Left cardiac atrium (tissue), 4 donors: ENCODE measurements at regions of chr9 and their contacts with region 1.

Region 1: DNA sequence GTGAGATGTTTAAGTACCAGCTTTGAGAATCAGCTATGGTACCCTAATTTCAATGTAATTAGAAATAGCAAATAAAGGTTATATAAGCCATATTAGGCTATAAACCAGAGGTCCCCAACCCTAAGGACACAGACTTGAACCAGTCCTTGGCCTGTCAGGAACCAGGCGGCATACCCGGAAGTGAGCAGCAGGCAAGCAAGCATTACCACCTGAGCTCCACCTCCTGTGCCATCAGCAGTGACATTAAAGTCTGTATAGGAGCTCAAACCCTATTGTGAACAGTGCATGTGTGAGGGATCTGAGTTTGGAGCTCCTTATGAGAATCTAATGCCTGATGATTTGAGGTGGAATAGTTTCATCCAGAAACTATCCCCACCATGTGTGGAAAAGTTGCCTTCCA is 1009.5 kb downstream of the PTPRD start:
- DNase-seq: no peak
- ATAC-seq: no peak

Region 2: DNA sequence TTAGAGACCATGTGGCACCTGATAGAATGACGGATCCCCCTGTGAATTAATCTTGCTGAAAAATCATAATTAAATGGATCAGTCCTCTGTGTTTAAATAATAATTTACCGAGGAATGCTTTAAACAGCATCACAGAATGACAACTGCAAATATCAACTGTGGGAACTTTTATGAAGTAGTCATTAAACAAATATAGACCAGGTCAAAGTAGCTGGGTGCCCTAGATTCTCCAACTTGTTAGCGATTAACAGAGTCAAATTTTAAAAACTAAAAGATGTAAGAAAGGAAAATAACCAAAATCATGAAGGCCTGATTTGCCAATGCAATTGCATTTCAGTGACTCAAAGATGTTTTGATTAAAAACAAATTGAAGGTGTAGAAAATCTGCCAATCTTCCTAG is 76.1 kb after region 1 on chr9:
- intact Hi-C with region 1: no loop called
- DNase-seq: no peak
- ATAC-seq: no peak

Region 3: DNA sequence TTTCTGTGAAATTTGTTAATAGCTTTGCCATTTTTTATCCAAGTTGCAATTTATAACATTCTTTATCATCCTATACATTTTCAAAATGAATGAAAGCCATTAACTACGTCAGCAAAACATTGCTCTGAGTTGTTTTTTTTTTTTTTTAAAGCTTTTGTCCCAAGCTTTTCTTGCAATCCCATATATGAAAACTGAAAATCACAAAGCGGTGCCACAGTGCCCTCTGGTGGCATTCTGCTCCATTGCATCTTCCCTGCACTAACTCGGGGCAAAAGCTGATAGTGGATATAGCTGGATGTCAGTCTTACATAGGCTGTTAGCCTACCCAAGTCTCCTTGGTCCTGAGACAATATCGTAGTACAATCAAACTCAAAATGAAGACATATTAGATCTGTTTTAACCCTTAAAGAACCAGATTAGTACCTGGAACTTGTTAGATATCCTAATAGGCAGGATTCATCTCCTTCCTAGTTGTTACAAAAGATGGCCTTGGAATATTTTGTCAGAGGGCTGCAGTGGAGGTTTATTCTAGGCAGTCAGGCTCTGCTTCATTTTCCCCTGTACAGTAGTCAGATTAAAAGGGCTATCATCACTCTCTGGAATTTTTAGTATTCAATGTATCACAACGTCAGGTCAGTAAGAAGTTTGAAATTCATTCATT is 339.5 kb after region 1 on chr9:
- intact Hi-C with region 1: loop called in 1 of 2 experiments (anchors 10 kb)
- DNase-seq: peak; percentile 33
- ATAC-seq: peak in 1 of 2 donors; percentile 49

Region 4: DNA sequence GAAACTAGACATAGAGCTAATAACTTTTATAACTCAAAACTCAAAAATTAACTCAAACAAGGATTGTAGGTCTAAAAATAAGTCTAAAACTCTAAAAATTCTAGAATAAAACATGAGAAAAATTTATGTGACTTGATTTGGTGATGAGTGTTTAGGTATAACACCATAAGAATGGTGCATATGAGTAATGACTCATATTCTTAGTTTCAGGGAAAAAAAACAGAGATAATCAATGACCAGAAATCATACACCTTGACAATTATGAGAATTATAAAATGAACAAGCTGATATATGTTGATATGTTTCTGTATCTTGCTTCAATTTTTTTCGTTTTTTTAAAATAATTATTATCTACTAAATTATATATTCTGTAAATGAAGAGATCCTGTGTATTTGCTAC is 468.2 kb after region 1 on chr9:
- intact Hi-C with region 1: no loop called
- DNase-seq: no peak
- ATAC-seq: no peak